ENCODE measurements at regions of chrX and their contacts with region 1.

Region 1: GRCh38 chrX:115898382-115899001 is 272.1 kb upstream of the AGTR2 start:
- DNase-seq: peak; percentile 37
- H3K4me3 ChIP-seq: 0 out of 4 replicates have a peak overlapping the region, but pooled peaks of 1 of the 2 experiments have one; percentile 9
- H3K27ac ChIP-seq: no peak overlapping the region
- H3K4me1 ChIP-seq: peaks cover 0 to 2% of the 10 kb centered on the region in 2 experiments; a peak in 1 of 4 replicates
- H3K27me3 ChIP-seq: no peaks in the 10 kb centered on the region; the same call in 1 of the 2 replicates
- CTCF ChIP-seq: peak; percentile 46
- EP300 ChIP-seq: no peak
- RAD21 ChIP-seq: peak; percentile 71

Region 2: GRCh38 chrX:115093191-115093590 is 805.3 kb before region 1 on chrX:
- CTCF ChIA-PET with region 1: no interaction called
- POLR2A ChIA-PET with region 1: no interaction called
- DNase-seq: no peak
- H3K4me3 ChIP-seq: no peak overlapping the region
- H3K27ac ChIP-seq: no peak overlapping the region
- H3K4me1 ChIP-seq: no peaks in the 10 kb centered on the region
- H3K27me3 ChIP-seq: no peaks in the 10 kb centered on the region
- CTCF ChIP-seq: no peak
- EP300 ChIP-seq: no peak
- RAD21 ChIP-seq: no peak

Region 3: GRCh38 chrX:115949898-115950822 is 51.7 kb after region 1 on chrX:
- CTCF ChIA-PET with region 1: interaction called, 10 read pairs
- POLR2A ChIA-PET with region 1: no interaction called
- DNase-seq: peak; percentile 62
- H3K4me3 ChIP-seq: no peak overlapping the region; a peak in 1 of 4 replicates
- H3K27ac ChIP-seq: no peak overlapping the region; a peak in 1 of 4 replicates
- H3K4me1 ChIP-seq: peaks cover 0 to 13% of the 10 kb centered on the region in 2 experiments; a peak in 1 of 4 replicates
- H3K27me3 ChIP-seq: no peaks in the 10 kb centered on the region
- CTCF ChIP-seq: peak; percentile 49
- EP300 ChIP-seq: no peak
- RAD21 ChIP-seq: peak; percentile 77

Measured in SK-N-SH (cell line).